Activated naive CD4-positive, alpha-beta T cell treated with anti-CD3 and anti-CD28 coated beads for 36 hours (primary cell): ENCODE measurements at regions of chr12 and their contacts with region 1.

Region 1: DNA sequence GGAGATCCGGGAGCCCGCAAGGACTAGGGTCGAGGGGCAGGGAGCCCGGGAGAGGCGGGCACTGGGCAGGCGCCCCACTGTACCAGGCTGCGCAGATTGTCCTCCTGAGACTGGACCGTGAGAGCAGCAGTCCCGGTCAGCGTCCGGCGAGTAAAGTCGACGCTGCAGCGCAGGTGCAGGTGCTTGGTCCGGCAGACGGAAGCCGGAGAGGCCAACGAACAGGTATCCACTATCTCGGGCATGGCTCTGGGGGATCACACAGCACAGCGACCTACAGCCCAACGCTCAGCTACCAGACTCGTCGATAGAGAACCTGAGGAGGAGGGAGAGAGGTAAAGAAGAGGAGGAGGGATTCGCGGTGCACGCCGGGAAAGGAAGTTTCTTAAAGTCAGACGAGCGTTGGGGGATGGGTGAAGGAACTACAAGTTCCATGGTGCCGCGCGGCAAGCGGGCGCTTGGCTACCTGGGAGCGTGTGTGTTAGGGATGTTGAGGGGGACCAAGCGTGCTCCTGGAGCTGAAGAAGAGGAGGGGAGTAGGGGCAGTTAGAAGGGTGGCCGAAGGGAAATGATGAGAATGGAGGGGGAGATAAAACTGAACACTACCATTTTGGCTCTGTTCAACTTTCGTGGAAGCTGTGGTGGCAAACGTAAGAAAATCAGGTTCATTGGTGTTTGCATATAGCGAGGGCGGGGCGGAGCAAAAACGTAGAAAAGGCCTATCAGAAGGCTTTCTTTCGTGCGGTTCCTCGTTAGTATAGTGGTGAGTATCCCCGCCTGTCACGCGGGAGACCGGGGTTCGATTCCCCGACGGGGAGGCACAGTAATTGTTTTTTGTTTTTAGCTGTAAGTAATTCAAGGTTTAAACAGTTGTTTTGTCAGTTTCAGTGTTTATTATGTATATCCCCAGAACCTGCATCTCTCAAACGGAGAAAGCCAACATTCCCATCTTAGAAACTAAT is at the start of gene LTA4H:
- DNase-seq: peak; percentile 98
- H3K4me3 Mint-ChIP-seq: no peak within 1 kb of the TSS
- H3K27ac Mint-ChIP-seq: no peak within 1 kb of the TSS
- H3K4me1 Mint-ChIP-seq: peaks cover 19% of the 10 kb centered on the region
- H3K27me3 Mint-ChIP-seq: no peaks in the 10 kb centered on the region
- total RNA-seq, gene LTA4H: 125 TPM

Region 2: GRCh38 chr12:95674631-95675030 is 360.9 kb before region 1 on chr12:
- CTCF ChIA-PET with region 1: no interaction called
- intact Hi-C with region 1: no loop called
- DNase-seq: no peak
- H3K4me3 Mint-ChIP-seq: no peak overlapping the region
- H3K27ac Mint-ChIP-seq: no peak overlapping the region
- H3K4me1 Mint-ChIP-seq: no peaks in the 10 kb centered on the region
- H3K27me3 Mint-ChIP-seq: no peaks in the 10 kb centered on the region

Region 3: GRCh38 chr12:95858479-95859343 is 176.8 kb before region 1 on chr12 and contains the start of gene SNRPF:
- CTCF ChIA-PET with region 1: no interaction called
- intact Hi-C with region 1: loop called (anchors 1 kb)
- DNase-seq: peak; percentile 97
- H3K4me3 Mint-ChIP-seq: no peak within 1 kb of the TSS
- H3K27ac Mint-ChIP-seq: no peak within 1 kb of the TSS
- H3K4me1 Mint-ChIP-seq: peaks cover 25% of the 10 kb centered on the region
- H3K27me3 Mint-ChIP-seq: peaks cover 3% of the 10 kb centered on the region
- total RNA-seq, gene SNRPF: 57.4 to 59.9 TPM

Region 4: DNA sequence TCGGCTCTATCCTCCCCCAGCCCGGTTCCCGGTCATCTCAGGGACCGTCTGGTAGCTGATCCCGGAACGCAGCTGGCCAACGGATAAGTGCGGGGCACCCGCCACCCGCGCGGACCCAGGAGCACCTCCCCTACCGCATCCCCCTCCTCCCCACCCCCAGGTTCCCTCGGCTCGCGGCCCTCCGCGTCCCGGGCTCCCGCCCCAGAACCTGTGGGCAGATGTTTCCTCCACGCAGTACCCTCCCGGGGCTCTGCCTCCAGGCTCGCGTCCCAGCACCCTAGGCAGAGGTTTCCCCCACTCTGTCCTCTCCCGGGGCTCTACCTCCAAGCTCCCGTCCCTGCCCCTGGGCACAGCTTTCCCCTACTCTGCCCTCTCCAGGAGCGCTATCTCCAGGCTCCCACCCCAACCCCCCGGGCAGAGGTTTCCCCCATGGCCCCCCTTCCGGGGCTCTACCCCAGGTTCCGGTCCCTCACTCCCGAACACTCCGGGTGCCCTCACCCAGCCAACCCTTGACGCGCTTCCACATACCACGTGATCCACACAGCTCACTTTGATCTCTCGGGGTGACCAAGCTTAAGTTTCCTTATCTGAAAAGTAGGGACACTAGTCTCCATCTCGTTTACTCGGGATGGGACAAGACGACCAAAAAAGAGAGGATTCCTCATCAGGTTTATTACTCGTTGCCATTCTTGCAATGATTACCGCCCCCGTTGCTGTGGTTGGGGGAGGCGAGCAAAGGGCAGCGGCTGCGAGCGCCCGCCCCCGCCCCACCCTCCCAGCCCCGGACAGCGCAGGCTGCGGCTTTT is 92.8 kb before region 1 on chr12 and contains the start of gene CCDC38:
- CTCF ChIA-PET with region 1: no interaction called
- intact Hi-C with region 1: loop called (anchors 1 kb)
- DNase-seq: peak; percentile 91
- H3K4me3 Mint-ChIP-seq: peak within 1 kb of the TSS; percentile 86
- H3K27ac Mint-ChIP-seq: peak within 1 kb of the TSS; percentile 80
- H3K4me1 Mint-ChIP-seq: peaks cover 4% of the 10 kb centered on the region
- H3K27me3 Mint-ChIP-seq: no peaks in the 10 kb centered on the region
- total RNA-seq, gene CCDC38: 0.49 TPM in 1 of 2 experiments, not detected in the other

Region 5: GRCh38 chr12:96177013-96177412 is 141.5 kb after region 1 on chr12:
- CTCF ChIA-PET with region 1: no interaction called
- intact Hi-C with region 1: loop called (anchors 1 kb)
- DNase-seq: peak; percentile 91
- H3K4me3 Mint-ChIP-seq: no peak overlapping the region
- H3K27ac Mint-ChIP-seq: peak overlapping the region; percentile 82
- H3K4me1 Mint-ChIP-seq: peaks cover 17% of the 10 kb centered on the region
- H3K27me3 Mint-ChIP-seq: no peaks in the 10 kb centered on the region